Breast epithelium (tissue), 4 donors: ENCODE measurements at regions of chr4 and their contacts with region 1.

Region 1: DNA sequence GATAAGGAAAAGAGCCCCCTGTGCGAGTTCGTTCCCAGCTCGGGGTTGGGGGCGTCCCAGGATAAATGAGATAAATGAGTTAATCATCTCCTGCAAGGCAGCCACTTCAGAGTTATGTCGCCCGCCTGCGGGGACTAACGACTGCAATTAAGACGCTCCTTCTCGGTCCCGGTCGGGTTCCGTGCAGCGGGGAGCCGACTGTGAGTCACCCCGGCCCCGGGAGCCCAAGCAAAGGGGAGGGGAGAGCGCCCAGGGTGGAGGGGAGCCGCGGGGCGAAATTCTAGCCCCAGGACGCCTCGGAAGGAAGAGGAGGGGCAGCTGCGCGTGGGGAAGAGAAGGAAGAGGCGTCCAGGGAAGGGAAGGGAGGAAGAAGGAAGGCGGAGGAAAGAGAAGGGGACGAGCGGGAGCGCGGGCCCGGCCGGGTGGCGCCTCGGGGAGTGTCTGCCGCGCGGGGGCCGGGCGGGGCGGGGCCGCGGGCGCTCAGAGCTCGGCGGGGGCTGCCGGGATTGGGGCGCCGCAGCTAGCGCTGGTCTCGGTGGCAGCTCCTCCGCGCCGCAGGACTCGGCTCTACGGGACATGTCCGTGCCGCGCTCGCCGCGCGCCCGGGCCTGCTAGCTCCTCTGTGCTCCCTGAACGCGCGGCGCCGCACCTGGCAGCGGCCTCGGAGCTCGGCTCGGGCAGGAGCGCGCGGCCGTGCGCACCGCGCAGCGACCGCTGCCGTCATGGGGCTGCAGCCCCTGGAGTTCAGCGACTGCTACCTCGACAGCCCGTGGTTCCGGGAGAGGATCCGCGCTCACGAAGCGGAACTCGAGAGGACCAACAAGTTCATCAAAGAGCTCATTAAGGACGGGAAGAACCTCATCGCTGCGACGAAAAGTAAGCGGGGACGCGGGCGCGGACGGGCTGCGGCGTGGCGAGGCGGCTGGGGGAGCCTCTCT is at the start of gene ARHGAP10:
- DNase-seq: peak; percentile 37 to 64
- H3K4me3 ChIP-seq: peak within 1 kb of the TSS; percentile 80 to 88 (median 83)
- H3K27ac ChIP-seq: peak within 1 kb of the TSS; percentile 91 to 96
- H3K4me1 ChIP-seq: no peaks in the 10 kb centered on the region
- H3K27me3 ChIP-seq: no peaks in the 10 kb centered on the region
- CTCF ChIP-seq: no peak
- POLR2A ChIP-seq: no peak
- total RNA-seq, gene ARHGAP10: 49.5 to 138 (median 62.6) TPM

Region 2: DNA sequence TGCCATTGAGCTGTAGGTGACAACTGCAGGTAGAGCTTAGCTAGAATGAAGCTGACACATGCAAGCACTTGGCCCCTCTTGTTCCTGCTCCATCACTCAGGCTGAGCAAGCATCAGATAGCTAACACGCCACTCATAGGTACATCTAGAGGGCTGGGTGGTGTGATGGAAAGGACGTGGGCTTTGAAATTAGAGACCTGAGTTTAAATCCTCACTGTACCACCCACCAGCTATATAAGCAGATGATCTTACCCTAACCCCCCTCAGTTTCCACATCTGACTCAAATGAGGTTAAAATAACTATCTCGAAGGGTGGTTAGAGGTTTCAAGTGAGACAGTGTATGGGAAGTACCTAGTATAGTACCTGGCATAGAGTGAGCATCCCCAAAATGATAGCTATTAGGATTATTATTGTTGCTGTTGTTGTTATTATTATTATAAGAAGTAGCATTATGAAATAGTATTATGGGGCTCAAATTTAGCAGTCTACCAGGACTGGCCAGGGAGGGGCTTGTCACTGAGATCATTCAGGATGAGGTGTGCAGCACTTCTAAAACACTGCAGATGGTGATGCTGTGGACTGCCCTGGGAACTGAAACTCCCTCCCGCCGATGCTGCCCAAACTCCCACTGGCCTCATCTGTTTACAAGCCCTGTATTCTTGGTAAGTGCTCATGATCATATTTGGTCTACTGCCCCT is 1458.5 kb before region 1 on chr4:
- intact Hi-C with region 1: no loop called
- DNase-seq: no peak
- H3K4me3 ChIP-seq: no peak overlapping the region
- H3K27ac ChIP-seq: no peak overlapping the region
- H3K4me1 ChIP-seq: no peaks in the 10 kb centered on the region
- H3K27me3 ChIP-seq: no peaks in the 10 kb centered on the region
- CTCF ChIP-seq: no peak
- POLR2A ChIP-seq: no peak

Region 3: DNA sequence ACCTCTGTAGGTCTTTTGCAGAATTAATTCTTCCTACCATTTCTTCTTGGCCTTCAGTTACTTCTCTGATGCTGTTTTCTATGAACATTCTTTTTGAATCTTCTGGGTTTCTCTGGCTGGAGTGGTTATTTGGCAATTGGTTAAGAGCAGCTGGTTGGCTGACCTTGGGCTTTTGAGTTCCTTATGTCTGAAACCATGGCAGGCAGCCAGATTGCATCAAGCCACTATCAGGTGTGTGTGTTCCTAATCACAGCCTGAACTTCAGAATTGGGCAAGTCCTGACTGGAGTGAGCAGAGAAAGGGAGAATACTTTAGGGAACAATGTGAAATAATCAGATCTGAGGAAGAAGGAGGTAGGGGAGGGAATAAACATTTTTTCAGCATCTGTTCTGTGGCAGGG is 90.3 kb after region 1 on chr4:
- intact Hi-C with region 1: loop called (anchors 10 kb)
- DNase-seq: peak in 1 of 2 donors; percentile 78
- H3K4me3 ChIP-seq: no peak overlapping the region
- H3K27ac ChIP-seq: peak overlapping the region; percentile 56 to 81
- H3K4me1 ChIP-seq: peaks cover 0 to 4% of the 10 kb centered on the region in 2 donors
- H3K27me3 ChIP-seq: no peaks in the 10 kb centered on the region
- CTCF ChIP-seq: no peak
- POLR2A ChIP-seq: no peak

Region 4: DNA sequence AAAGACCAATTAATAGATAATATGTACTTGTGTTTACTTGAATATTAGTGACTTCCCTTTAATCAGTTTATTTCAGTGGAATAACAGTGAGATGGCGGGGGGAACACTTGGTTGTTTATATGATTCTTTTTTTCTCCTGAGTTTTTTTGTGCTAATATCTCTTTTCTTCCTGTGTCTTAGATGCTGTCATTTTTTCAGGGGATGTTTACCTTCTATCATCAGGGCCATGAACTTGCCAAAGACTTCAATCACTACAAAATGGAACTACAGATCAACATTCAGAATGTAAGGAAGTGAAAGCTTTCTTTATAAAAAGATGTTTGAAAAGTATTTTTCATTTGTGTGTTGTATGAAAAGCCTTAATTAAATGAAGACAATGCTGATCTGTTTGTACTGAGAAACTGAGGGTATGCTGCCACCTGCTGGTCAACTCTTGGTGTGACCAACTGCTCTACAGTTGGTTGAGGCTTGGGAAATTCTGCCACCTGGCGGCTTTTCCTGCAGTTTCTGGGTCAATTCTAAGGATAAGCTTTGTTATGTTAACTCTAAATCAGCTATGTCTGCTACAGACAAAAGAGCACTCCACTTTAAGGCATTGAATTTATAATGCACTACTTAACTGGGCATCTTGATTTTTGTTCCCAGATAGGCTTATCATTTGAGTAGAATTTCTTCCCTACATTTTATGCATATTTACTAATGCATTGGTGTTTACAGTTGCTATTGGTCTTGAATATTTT is 134.9 kb after region 1 on chr4:
- intact Hi-C with region 1: loop called (anchors 10 kb)
- DNase-seq: peak; percentile 88 to 94
- H3K4me3 ChIP-seq: no peak overlapping the region
- H3K27ac ChIP-seq: no peak overlapping the region
- H3K4me1 ChIP-seq: no peaks in the 10 kb centered on the region
- H3K27me3 ChIP-seq: no peaks in the 10 kb centered on the region
- CTCF ChIP-seq: peak; percentile 99 to 100 (median 99)
- POLR2A ChIP-seq: no peak